ENCODE measurements at regions of chr1 and their contacts with region 1.

Region 1: GRCh38 chr1:226736908-226737818 is 1.9 kb downstream of the ITPKB start:
- DNase-seq: peak; percentile 51
- ATAC-seq: peak; percentile 44
- H3K4me3 Mint-ChIP-seq: peak overlapping the region; percentile 93
- H3K27ac Mint-ChIP-seq: peak overlapping the region; percentile 86
- H3K4me1 Mint-ChIP-seq: peaks cover 68% of the 10 kb centered on the region
- H3K27me3 Mint-ChIP-seq: no peaks in the 10 kb centered on the region
- CTCF ChIP-seq: no peak

Region 2: GRCh38 chr1:226642876-226643576 is 94.1 kb before region 1 on chr1:
- CTCF ChIA-PET with region 1: interaction called, 6 read pairs
- POLR2A ChIA-PET with region 1: interaction called, 33 read pairs
- intact Hi-C with region 1: loop called (anchors 1 kb)
- DNase-seq: peak; percentile 52
- ATAC-seq: peak; percentile 63
- H3K4me3 Mint-ChIP-seq: peak overlapping the region; percentile 67
- H3K27ac Mint-ChIP-seq: peak overlapping the region; percentile 88
- H3K4me1 Mint-ChIP-seq: peaks cover 76% of the 10 kb centered on the region
- H3K27me3 Mint-ChIP-seq: no peaks in the 10 kb centered on the region
- CTCF ChIP-seq: no peak

Region 3: DNA sequence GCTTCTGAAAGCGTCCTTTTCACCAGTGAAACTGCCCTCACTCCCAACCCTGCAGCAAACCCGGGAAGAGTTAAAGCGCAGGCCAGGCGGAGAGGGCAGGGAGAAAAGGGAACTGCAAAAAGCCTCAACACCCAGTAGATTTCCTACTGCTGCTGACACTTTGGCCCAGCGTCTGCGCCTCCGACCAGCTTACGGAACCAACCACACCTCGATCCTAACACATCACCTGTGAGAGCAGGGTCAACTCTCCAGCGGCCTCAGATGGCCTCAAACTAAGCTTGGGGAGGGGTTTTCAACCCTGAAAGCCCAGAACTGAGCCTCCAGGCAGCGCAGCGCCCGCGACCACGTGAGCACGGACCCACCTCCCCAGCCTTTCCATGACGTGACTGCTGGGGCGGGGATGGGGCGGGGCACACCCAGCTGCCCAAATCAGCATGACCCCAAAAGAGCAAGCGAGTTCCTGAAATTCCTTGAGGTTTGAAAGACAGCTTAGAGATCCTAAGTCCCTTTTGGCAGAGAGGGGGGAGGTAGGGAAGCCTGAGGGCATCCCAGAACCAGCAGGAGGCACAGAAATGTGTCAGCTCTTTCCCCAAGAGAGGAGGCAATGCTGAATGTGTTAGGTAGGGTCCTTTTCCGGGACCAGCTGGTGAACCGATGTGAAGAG is 57.2 kb before region 1 on chr1:
- CTCF ChIA-PET with region 1: no interaction called
- POLR2A ChIA-PET with region 1: interaction called, 29 read pairs
- intact Hi-C with region 1: loop called (anchors 1 kb)
- DNase-seq: peak; percentile 69
- ATAC-seq: peak; percentile 38
- H3K4me3 Mint-ChIP-seq: peak overlapping the region; percentile 86
- H3K27ac Mint-ChIP-seq: peak overlapping the region; percentile 97
- H3K4me1 Mint-ChIP-seq: peaks cover 99% of the 10 kb centered on the region
- H3K27me3 Mint-ChIP-seq: no peaks in the 10 kb centered on the region
- CTCF ChIP-seq: no peak

Region 4: DNA sequence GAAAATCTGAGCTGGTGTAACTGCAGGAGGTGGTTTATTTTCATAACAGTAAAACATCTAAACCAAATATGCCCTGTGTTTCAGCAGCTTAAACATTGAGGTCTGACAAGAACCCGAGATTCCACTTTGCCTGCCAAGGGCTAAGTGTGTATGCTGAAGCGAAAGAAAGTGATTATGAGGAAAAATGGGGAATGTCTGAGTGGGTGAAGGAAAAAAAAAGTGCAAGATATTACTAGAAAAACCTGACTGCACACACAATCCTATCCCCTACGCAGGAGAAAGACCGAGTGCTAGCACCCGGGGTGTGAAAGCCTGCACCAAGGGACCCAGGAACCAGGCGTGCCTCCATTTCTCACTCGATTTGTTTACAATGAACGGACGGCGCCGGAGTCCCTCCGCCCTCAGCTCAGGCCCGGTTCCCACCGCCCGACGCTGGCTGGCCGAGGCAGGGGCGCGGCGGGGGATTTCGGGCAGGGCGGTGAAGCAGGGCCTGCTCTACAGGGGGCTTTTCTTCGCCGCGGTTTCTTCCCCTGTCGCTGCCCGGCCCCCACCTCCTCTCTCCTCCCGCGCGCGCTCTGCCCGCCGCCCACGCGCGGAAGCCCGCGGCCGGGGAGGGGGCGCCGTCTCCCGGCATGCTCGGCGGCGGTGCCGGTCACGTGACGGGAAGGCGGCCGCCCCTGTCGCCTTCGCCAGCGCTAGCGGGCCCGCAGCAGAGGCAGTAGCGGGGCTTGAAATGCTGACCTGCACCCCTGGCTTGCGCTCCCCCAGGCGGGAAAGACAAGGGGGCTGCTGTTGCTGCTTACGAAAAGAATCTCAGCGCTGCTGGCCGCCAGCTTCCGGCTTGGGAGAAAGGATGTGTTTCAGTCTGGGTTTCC is 34.0 kb before region 1 on chr1:
- CTCF ChIA-PET with region 1: interaction called, 3 read pairs
- POLR2A ChIA-PET with region 1: interaction called, 45 read pairs
- intact Hi-C with region 1: no loop called
- DNase-seq: peak; percentile 90
- ATAC-seq: peak; percentile 90
- H3K4me3 Mint-ChIP-seq: peak overlapping the region; percentile 76
- H3K27ac Mint-ChIP-seq: peak overlapping the region; percentile 93
- H3K4me1 Mint-ChIP-seq: peaks cover 78% of the 10 kb centered on the region
- H3K27me3 Mint-ChIP-seq: no peaks in the 10 kb centered on the region
- CTCF ChIP-seq: no peak

Region 5: DNA sequence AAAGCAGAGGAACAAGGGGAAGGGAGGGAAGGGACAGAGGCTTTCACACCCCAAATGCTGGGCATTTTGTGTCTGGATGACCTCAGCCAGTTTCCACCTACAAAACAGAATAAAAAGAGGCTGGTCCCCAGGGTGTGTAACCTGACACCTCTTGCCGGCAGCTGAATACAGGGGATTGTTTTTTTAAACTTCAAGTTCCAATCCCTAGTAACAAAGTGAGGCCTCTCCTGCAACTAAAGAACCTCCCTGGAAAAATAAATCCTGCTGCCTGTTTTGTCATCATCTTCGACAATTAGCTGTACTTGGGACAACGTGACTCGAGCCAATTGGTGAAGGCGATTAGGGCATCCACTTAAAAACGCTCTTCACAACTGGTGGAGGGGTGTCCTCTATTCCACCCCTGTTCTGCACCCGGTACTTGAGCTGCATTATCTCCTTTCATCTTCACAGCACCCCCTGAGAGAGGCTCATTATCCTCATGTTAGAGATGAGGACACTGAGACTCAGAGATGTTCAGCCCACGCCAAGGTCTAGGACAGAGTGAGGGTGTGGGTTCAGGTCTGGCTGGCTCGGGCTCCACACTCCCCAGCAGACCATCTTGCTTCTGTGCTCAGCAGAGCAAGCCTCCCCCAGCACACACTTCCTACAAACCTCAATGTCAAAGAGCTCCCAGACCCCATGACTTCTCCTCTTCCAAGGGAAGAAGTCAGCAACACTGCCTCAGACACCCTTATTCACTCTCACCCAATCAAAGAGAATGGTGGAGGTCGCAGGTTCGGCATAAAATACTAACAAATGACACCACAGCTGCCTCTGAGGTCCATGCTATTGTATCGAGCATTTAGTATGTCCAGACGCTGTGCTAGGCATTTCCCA is 13.3 kb before region 1 on chr1:
- CTCF ChIA-PET with region 1: no interaction called
- POLR2A ChIA-PET with region 1: no interaction called
- intact Hi-C with region 1: loop called (anchors 1 kb)
- DNase-seq: no peak
- ATAC-seq: no peak
- H3K4me3 Mint-ChIP-seq: peak overlapping the region; percentile 46
- H3K27ac Mint-ChIP-seq: peak overlapping the region; percentile 79
- H3K4me1 Mint-ChIP-seq: peaks cover 79% of the 10 kb centered on the region
- H3K27me3 Mint-ChIP-seq: no peaks in the 10 kb centered on the region
- CTCF ChIP-seq: no peak

Region 6: DNA sequence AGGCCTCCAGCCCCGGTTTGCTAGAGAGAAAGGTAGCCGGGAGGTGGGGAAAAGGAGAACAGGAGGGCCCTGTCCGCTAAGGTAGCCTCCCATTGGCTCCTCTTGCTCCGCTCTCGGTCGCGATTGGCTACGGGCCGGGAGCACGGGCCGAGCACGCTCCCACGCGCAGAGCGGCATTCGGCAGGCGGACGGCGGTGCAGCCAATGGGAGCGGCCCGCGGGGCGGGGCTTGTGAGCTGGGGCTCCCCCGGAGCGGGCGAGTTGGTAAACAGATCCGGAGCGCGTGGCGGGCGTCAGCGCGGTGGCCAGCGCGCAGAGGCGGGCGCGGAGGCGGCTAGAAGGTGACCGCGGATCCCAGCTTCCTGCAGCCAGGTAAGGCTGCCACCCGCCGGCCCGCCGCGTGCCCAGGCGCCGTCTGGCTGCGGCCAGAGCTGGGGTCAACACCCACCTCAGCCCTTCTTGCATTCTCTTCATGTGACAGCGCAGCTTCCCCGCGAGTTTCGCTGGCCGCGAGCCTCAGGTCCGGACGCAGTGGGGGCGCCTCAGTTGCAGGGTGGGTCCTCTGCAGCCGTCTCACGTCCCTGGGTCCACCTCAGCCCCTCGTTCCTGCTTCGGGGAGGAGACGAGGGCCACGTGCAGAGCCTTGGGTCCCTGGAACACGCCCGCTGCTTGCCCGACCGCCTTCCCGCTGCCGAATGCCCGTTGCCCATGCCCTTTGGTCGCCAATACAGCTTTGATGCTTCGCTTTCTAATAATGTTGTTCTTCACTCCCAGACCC is 203.1 kb after region 1 on chr1 and contains the start of gene COQ8A:
- CTCF ChIA-PET with region 1: no interaction called
- POLR2A ChIA-PET with region 1: no interaction called
- intact Hi-C with region 1: loop called (anchors 5 kb)
- DNase-seq: peak; percentile 97
- ATAC-seq: peak; percentile 93
- H3K4me3 Mint-ChIP-seq: peak within 1 kb of the TSS; percentile 89
- H3K27ac Mint-ChIP-seq: peak within 1 kb of the TSS; percentile 96
- H3K4me1 Mint-ChIP-seq: peaks cover 49% of the 10 kb centered on the region
- H3K27me3 Mint-ChIP-seq: no peaks in the 10 kb centered on the region
- CTCF ChIP-seq: no peak
- total RNA-seq, gene COQ8A: 24.7 and 28.5 TPM in 2 replicates

Region 7: DNA sequence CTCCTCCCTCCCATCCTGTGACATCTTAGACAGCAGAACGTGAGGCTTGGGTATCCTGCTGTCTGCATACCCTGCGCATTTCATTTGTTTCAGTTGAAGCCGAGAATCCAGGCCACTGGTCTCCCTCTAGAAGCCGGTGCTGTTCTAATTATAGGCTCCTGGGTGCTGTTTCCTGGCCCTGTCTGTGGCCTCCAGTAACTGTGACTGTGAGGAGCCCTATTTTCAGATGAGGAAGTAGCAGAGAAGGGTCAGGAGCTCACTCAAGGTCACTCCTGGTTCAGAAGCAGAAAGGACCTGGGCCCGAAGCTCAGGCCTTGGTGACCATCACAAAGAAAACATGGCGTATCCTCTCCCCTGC is 226.9 kb after region 1 on chr1:
- CTCF ChIA-PET with region 1: no interaction called
- POLR2A ChIA-PET with region 1: no interaction called
- intact Hi-C with region 1: no loop called
- DNase-seq: no peak
- ATAC-seq: no peak
- H3K4me3 Mint-ChIP-seq: no peak overlapping the region
- H3K27ac Mint-ChIP-seq: no peak overlapping the region
- H3K4me1 Mint-ChIP-seq: peaks cover 32% of the 10 kb centered on the region
- H3K27me3 Mint-ChIP-seq: no peaks in the 10 kb centered on the region
- CTCF ChIP-seq: no peak

Measured in activated B cell treated with CpG ODN at 0.5 μM for 24 hours (primary cell).